ENCODE measurements at regions of chr9 and their contacts with region 1.

Region 1: GRCh38 chr9:88706193-88707118 is 171.5 kb downstream of the NXNL2 start:
- DNase-seq: no peak
- H3K4me3 ChIP-seq: no peak overlapping the region
- H3K27ac ChIP-seq: no peak overlapping the region
- H3K4me1 ChIP-seq: no peaks in the 10 kb centered on the region
- H3K27me3 ChIP-seq: no peaks in the 10 kb centered on the region
- CTCF ChIP-seq: no peak

Region 2: DNA sequence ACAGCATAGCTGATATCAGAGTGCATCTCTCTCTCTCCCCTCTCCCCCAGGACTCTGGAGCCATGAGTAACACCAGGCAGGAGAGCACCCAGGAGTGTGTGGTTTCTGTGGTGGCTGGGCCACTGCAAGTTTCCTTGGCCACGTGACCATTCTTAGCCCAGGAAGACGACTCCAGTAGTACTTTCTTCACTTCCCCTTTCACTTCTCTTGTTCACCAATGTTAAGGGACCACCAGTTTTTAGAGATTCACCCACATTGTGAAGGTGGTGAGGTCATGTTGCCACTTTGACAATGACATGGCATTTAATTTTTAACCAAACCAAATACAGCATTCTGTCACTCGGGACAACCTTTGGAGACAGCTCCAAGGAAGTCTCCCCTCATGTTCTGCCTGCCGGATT is 1226.7 kb before region 1 on chr9:
- CTCF ChIA-PET with region 1: no interaction called
- POLR2A ChIA-PET with region 1: no interaction called
- intact Hi-C with region 1: no loop called
- DNase-seq: no peak
- H3K4me3 ChIP-seq: no peak overlapping the region
- H3K27ac ChIP-seq: no peak overlapping the region
- H3K4me1 ChIP-seq: no peaks in the 10 kb centered on the region
- H3K27me3 ChIP-seq: no peaks in the 10 kb centered on the region
- CTCF ChIP-seq: no peak

Region 3: GRCh38 chr9:88605512-88606362 is 100.7 kb before region 1 on chr9:
- CTCF ChIA-PET with region 1: no interaction called
- POLR2A ChIA-PET with region 1: no interaction called
- intact Hi-C with region 1: loop called (anchors 10 kb)
- DNase-seq: no peak
- H3K4me3 ChIP-seq: no peak overlapping the region
- H3K27ac ChIP-seq: no peak overlapping the region
- H3K4me1 ChIP-seq: no peaks in the 10 kb centered on the region
- H3K27me3 ChIP-seq: no peaks in the 10 kb centered on the region
- CTCF ChIP-seq: no peak

Region 4: DNA sequence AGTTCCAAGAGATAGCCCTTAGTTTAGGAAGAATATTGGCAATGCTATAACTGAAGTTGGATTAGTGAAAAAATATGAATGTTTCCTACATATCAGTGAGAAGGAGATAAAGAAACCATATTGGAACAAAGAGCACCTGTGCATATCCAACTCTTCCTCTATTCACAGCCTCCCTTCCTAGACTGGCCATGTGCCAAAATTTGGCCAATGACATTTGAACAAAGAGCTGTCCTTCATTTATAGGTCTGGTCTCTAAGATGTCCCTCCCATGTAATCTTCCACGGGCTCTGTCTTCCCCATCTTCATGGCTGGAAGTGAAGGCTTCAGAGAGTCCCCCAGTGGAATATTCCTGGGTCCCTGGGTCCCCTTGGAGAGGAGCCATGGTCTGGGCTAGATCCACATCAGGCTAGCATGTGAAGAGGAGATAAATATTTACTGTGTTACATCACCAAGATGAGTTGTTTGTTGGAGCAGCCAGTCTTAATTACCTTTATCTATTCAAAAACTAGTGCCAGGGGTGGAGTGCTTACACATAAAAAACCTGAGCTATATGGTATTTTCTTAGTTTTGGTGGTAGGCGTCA is 94.8 kb after region 1 on chr9:
- CTCF ChIA-PET with region 1: no interaction called
- POLR2A ChIA-PET with region 1: no interaction called
- intact Hi-C with region 1: no loop called
- DNase-seq: no peak
- H3K4me3 ChIP-seq: no peak overlapping the region
- H3K27ac ChIP-seq: no peak overlapping the region
- H3K4me1 ChIP-seq: peaks cover 28% of the 10 kb centered on the region
- H3K27me3 ChIP-seq: no peaks in the 10 kb centered on the region
- CTCF ChIP-seq: no peak

Region 5: GRCh38 chr9:88916894-88917293 is 210.4 kb after region 1 on chr9:
- CTCF ChIA-PET with region 1: no interaction called
- POLR2A ChIA-PET with region 1: interaction called, 10 read pairs
- intact Hi-C with region 1: no loop called
- DNase-seq: no peak
- H3K4me3 ChIP-seq: no peak overlapping the region
- H3K27ac ChIP-seq: no peak overlapping the region
- H3K4me1 ChIP-seq: peaks cover 10% of the 10 kb centered on the region
- H3K27me3 ChIP-seq: no peaks in the 10 kb centered on the region
- CTCF ChIP-seq: no peak